Sigmoid colon (tissue), 7 donors: ENCODE measurements at regions of chr7 and their contacts with region 1.

Region 1: DNA sequence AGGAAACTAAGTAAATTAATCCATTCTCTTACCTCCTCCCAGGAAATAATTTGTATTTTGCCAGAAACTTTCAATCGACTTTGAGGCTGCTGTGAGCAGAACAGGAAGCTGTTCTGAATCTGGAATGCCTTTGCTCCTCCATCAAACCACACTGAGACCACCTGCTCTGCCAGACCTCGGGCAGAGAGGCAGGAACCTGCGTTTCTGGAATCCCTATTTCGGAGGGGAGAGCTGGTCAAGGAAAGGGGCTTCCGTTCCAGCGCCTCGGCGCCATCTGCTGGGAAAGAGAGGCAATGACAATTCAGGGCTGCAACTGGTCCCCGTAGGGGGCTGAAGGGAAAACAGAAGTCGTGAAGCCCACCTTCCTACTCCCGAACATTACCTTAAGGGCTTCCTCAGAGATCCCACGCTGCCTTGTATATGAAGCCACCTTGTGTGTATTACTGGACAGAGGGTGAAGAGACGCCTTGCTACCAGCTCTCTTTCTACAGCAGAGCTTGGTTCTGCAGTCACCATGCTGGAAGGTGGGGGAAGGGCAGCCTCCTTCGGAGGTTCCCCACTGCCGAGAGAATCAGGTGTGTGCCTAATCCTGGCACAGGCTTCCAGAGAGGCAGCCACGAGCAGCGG is 31.2 kb downstream of the ZNF467 start:
- DNase-seq: peak; percentile 81
- H3K4me3 ChIP-seq: peak overlapping the region; percentile 18 to 40 (median 31)
- H3K27ac ChIP-seq: peak overlapping the region in 1 of 4 donors; percentile 16
- H3K4me1 ChIP-seq: peaks cover 0 to 14% (median 11%) of the 10 kb centered on the region in 4 donors
- H3K27me3 ChIP-seq: peaks cover 0 to 7% (median 0%) of the 10 kb centered on the region in 3 donors
- CTCF ChIP-seq: peak; percentile 84 to 97 (median 88)
- EP300 ChIP-seq: no peak
- POLR2A ChIP-seq: no peak

Region 2: DNA sequence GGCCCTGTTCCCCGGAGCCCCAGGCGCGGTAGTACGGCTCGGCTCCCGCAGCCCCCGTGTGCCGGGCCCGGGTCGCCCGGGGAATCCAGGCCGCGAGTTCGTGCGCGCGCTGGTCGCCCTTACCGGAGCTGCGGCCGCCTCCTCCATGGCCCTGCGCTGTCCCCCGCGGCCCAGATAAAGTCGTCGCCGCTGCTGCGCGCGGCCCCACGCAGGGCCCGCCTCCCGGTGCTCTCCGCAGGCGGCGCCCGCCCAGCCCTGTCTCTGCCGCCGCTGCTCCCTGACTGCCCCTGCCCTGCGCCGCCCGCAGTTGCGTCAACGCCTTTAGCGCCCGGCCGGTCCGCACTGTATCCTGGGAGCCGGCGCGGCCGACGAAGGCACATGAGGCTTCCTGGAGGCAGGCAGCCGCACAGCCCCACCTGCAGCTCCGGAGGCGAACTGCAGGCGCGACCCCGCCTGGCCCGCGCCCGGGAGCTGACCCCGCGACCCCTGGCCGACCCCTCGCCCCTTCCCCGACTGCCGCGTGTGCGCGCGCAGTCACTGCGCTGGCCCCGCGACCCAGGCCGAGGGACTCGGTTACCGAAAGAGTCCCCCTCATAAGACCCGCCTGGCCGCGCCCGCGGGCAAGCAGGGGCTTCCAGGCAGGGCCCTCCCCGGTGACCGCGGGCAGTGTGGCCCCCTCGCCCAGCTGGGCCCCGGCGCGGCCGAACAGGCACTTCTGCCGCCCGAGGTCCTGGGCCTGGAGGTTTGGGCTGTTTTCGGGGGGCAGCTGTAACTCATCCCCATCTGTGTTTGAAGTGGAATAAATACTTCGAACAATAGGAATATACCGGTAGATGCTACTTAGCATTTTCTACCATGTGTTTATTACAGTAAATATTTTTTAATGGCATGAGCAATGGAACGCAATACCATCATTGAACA is 117.5 kb before region 1 on chr7:
- intact Hi-C with region 1: loop called (anchors 5 kb)
- DNase-seq: peak; percentile 96
- H3K4me3 ChIP-seq: peak overlapping the region; percentile 82 to 100 (median 93)
- H3K27ac ChIP-seq: peak overlapping the region; percentile 89 to 95 (median 92)
- H3K4me1 ChIP-seq: peaks cover 0 to 30% (median 23%) of the 10 kb centered on the region in 4 donors
- H3K27me3 ChIP-seq: no peaks in the 10 kb centered on the region
- CTCF ChIP-seq: peak; percentile 49 to 98 (median 82)
- EP300 ChIP-seq: no peak
- POLR2A ChIP-seq: peak; percentile 16 to 32

Region 3: DNA sequence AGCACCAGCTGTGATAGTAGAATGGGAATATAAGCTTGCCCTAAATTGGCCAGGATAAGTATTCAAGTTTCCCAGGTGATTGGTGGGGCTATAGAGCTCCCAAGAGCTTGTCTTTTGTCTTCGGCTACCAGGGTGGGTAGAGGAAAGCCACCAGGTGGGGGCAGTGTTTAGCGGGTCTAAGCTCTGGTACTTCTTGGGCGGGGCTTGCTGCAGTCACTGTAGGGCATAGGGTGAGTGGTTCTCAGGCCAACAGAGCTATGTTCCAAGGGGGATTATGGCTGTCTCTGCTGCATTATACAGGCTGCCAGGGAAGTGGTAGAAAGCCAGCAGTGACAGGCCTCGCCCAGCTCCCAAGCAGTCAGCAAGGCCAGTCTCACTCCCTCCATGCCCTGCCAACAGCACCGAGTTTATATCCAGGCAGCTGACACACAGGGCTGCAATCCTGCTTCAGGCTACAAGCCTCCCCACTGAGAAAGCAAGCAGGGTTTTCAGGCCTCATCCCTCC is 79.5 kb before region 1 on chr7:
- intact Hi-C with region 1: loop called (anchors 1 kb)
- DNase-seq: peak; percentile 84
- H3K4me3 ChIP-seq: no peak overlapping the region
- H3K27ac ChIP-seq: peak overlapping the region; percentile 13 to 53 (median 32)
- H3K4me1 ChIP-seq: peaks cover 0 to 4% (median 0%) of the 10 kb centered on the region in 4 donors
- H3K27me3 ChIP-seq: no peaks in the 10 kb centered on the region
- CTCF ChIP-seq: peak in 3 of 4 experiments; percentile 34 to 52 (median 37)
- EP300 ChIP-seq: no peak
- POLR2A ChIP-seq: no peak